IMR-90 (cell line): ENCODE measurements at regions of chr7 and their contacts with region 1.

Region 1: DNA sequence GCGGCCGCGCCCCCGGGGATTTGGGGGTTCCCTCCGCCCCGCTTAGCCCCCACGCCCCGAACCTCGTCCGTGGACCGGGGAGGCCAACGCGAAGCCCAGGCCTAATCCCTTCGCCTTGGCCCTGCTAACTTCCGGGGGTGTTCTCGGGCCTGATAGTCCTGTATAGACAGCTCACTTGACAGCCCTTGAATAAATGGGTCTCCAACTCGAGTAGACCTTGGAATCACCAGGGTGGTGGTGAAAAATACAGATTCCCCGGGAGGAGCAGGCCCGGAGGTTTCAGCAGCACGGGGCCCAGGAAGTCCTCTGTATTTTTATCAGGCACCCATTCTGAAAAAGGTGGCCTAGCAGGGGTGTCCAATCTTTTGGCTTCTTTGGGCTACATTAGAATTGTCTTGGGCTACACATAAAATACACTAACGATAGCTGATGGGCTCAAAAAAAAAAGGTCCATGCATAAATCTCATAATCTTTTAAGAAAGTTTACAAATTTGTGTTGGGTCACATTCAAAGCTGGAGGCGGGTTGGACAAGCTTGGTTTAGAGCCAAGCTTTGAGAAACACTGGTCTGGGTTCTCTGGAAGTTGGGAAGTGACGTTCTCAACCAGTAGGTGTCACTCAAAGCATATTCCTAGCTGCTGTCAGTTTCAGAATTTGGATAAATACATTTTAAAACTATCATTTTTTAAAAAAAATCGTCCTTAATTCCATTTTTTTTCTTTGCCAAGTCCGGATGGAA is 221.7 kb downstream of the PHTF2 start:
- DNase-seq: peak; percentile 91
- ATAC-seq: peak; percentile 50
- H3K4me3 ChIP-seq: no peak overlapping the region
- H3K27ac ChIP-seq: peak overlapping the region; percentile 92
- H3K4me1 ChIP-seq: peaks cover 5% of the 10 kb centered on the region
- H3K27me3 ChIP-seq: no peaks in the 10 kb centered on the region
- CTCF ChIP-seq: peak; percentile 86
- POLR2A ChIP-seq: no peak
- RAD21 ChIP-seq: peak; percentile 83

Region 2: DNA sequence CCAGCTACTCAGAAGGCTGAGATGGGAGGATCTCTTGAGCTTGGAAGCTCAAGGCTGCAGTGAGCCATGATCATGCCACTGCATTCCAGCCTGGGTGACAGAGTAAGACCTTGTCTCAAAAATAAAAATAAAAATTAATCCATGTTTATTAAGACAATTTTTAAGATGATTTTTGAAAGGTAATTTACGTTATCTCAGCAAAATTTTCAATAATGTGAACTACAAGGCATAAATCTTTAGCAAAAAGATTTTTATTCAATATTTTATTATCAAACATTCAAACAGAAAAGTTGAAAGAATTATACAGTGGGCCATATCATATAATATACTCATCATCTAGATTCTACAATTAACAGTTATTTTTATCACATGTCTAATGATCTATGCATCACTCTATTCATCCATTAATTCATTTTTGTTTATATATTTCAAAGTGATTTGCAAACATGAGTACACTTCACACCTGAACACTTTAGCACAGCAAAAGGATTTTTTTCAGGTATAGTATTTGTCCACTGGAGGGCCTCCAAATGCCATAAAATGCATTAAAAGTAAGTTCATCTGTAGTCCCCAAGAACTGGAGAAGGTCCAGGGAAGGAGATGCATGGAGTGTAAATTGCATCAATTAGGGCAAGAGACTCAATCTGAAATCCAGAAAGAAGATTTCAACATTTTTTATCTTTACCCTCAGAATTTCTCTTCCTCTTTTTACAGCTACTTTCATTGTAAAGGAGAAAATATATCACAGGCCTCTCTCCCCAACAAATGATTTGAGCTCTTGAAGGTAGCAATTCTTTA is 362.7 kb before region 1 on chr7:
- CTCF ChIA-PET with region 1: no interaction called
- POLR2A ChIA-PET with region 1: no interaction called
- dilution Hi-C with region 1: no loop called
- in situ Hi-C with region 1: no loop called
- intact Hi-C with region 1: loop called (anchors 5 kb)
- DNase-seq: peak; percentile 43
- ATAC-seq: peak; percentile 71
- H3K4me3 ChIP-seq: no peak overlapping the region
- H3K27ac ChIP-seq: no peak overlapping the region
- H3K4me1 ChIP-seq: peaks cover 1% of the 10 kb centered on the region; the same call in 1 of the 2 replicates
- H3K27me3 ChIP-seq: no peaks in the 10 kb centered on the region
- CTCF ChIP-seq: peak; percentile 60
- POLR2A ChIP-seq: no peak
- RAD21 ChIP-seq: peak; percentile 67

Region 3: DNA sequence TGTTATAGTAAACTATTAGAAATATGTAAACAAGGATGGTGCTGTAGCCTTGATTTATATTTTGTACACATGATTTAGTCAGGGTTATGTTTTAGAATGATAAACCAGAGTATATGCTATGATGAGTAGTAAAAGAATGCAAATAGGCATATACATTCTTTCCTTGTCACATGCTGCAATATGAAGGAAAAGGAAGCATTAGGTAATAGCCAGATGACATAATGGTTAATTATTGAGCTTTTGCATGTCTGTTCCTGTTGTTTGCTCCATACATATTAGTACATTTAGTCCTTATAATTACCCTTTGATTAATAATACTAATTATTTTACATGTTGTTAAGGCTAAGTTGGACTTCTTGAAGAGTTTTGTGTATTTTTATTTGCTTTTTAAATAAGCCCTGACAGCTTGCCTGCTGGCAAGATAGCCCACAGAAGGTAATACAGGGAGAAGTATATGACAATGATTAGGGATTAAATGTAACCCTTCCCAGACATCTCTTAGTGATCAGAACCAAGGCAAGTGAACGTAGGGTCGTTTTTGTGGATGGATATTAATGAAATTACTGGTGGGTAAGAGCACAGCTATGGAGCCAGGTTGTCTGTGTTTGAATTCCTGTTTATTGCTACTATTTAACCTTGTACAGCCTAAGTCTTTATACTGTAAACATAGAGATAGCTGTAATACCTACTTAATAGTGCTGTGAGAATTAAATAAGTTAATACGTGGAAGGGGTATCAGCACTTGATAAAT is 153.3 kb before region 1 on chr7:
- CTCF ChIA-PET with region 1: no interaction called
- POLR2A ChIA-PET with region 1: no interaction called
- dilution Hi-C with region 1: no loop called
- in situ Hi-C with region 1: no loop called
- intact Hi-C with region 1: no loop called
- DNase-seq: peak; percentile 87
- ATAC-seq: peak; percentile 88
- H3K4me3 ChIP-seq: no peak overlapping the region
- H3K27ac ChIP-seq: peak overlapping the region; percentile 50
- H3K4me1 ChIP-seq: peaks cover 5% of the 10 kb centered on the region
- H3K27me3 ChIP-seq: no peaks in the 10 kb centered on the region
- CTCF ChIP-seq: no peak
- POLR2A ChIP-seq: no peak
- RAD21 ChIP-seq: no peak

Region 4: GRCh38 chr7:78062214-78062613 is 41.9 kb after region 1 on chr7:
- CTCF ChIA-PET with region 1: no interaction called
- POLR2A ChIA-PET with region 1: no interaction called
- dilution Hi-C with region 1: no loop called
- in situ Hi-C with region 1: no loop called
- intact Hi-C with region 1: no loop called
- DNase-seq: no peak
- ATAC-seq: no peak
- H3K4me3 ChIP-seq: no peak overlapping the region
- H3K27ac ChIP-seq: no peak overlapping the region
- H3K4me1 ChIP-seq: no peaks in the 10 kb centered on the region
- H3K27me3 ChIP-seq: no peaks in the 10 kb centered on the region
- CTCF ChIP-seq: no peak
- POLR2A ChIP-seq: no peak
- RAD21 ChIP-seq: no peak

Region 5: GRCh38 chr7:78226059-78226719 is 205.9 kb after region 1 on chr7:
- CTCF ChIA-PET with region 1: no interaction called
- POLR2A ChIA-PET with region 1: no interaction called
- dilution Hi-C with region 1: no loop called
- in situ Hi-C with region 1: no loop called
- intact Hi-C with region 1: loop called (anchors 1 kb)
- DNase-seq: peak; percentile 45
- ATAC-seq: peak; percentile 33; the same call in 1 of the 2 replicates
- H3K4me3 ChIP-seq: no peak overlapping the region
- H3K27ac ChIP-seq: peak overlapping the region; percentile 59; the same call in 1 of the 2 replicates
- H3K4me1 ChIP-seq: peaks cover 14% of the 10 kb centered on the region
- H3K27me3 ChIP-seq: no peaks in the 10 kb centered on the region
- CTCF ChIP-seq: peak; percentile 52
- POLR2A ChIP-seq: no peak
- RAD21 ChIP-seq: peak; percentile 47

Region 6: GRCh38 chr7:78463039-78463438 is 442.7 kb after region 1 on chr7:
- CTCF ChIA-PET with region 1: no interaction called
- POLR2A ChIA-PET with region 1: no interaction called
- dilution Hi-C with region 1: no loop called
- in situ Hi-C with region 1: no loop called
- intact Hi-C with region 1: no loop called
- DNase-seq: no peak
- ATAC-seq: no peak
- H3K4me3 ChIP-seq: no peak overlapping the region
- H3K27ac ChIP-seq: no peak overlapping the region
- H3K4me1 ChIP-seq: no peaks in the 10 kb centered on the region
- H3K27me3 ChIP-seq: no peaks in the 10 kb centered on the region
- CTCF ChIP-seq: no peak
- POLR2A ChIP-seq: no peak
- RAD21 ChIP-seq: no peak

Region 7: GRCh38 chr7:78510580-78511188 is 490.4 kb after region 1 on chr7:
- CTCF ChIA-PET with region 1: no interaction called
- POLR2A ChIA-PET with region 1: no interaction called
- dilution Hi-C with region 1: no loop called
- in situ Hi-C with region 1: no loop called
- intact Hi-C with region 1: loop called (anchors 1 kb)
- DNase-seq: peak; percentile 67
- ATAC-seq: peak; percentile 82
- H3K4me3 ChIP-seq: no peak overlapping the region
- H3K27ac ChIP-seq: no peak overlapping the region
- H3K4me1 ChIP-seq: no peaks in the 10 kb centered on the region
- H3K27me3 ChIP-seq: no peaks in the 10 kb centered on the region
- CTCF ChIP-seq: peak; percentile 79
- POLR2A ChIP-seq: no peak
- RAD21 ChIP-seq: peak; percentile 88

Region 8: GRCh38 chr7:78924581-78924980 is 904.3 kb after region 1 on chr7:
- CTCF ChIA-PET with region 1: no interaction called
- POLR2A ChIA-PET with region 1: no interaction called
- dilution Hi-C with region 1: no loop called
- in situ Hi-C with region 1: no loop called
- intact Hi-C with region 1: loop called (anchors 2 kb)
- DNase-seq: peak; percentile 43
- ATAC-seq: no peak
- H3K4me3 ChIP-seq: no peak overlapping the region
- H3K27ac ChIP-seq: no peak overlapping the region
- H3K4me1 ChIP-seq: no peaks in the 10 kb centered on the region
- H3K27me3 ChIP-seq: no peaks in the 10 kb centered on the region
- CTCF ChIP-seq: peak; percentile 45
- POLR2A ChIP-seq: no peak
- RAD21 ChIP-seq: peak; percentile 59

Region 9: GRCh38 chr7:79272066-79272669 is 1251.9 kb after region 1 on chr7:
- CTCF ChIA-PET with region 1: no interaction called
- POLR2A ChIA-PET with region 1: no interaction called
- dilution Hi-C with region 1: no loop called
- in situ Hi-C with region 1: no loop called
- intact Hi-C with region 1: loop called (anchors 10 kb)
- DNase-seq: peak; percentile 70
- ATAC-seq: peak; percentile 81
- H3K4me3 ChIP-seq: no peak overlapping the region
- H3K27ac ChIP-seq: no peak overlapping the region
- H3K4me1 ChIP-seq: peaks cover 2% of the 10 kb centered on the region; the same call in 1 of the 2 replicates
- H3K27me3 ChIP-seq: no peaks in the 10 kb centered on the region
- CTCF ChIP-seq: peak; percentile 66
- POLR2A ChIP-seq: no peak
- RAD21 ChIP-seq: peak; percentile 64